ENCODE measurements at regions of chr1 and their contacts with region 1.

Region 1: DNA sequence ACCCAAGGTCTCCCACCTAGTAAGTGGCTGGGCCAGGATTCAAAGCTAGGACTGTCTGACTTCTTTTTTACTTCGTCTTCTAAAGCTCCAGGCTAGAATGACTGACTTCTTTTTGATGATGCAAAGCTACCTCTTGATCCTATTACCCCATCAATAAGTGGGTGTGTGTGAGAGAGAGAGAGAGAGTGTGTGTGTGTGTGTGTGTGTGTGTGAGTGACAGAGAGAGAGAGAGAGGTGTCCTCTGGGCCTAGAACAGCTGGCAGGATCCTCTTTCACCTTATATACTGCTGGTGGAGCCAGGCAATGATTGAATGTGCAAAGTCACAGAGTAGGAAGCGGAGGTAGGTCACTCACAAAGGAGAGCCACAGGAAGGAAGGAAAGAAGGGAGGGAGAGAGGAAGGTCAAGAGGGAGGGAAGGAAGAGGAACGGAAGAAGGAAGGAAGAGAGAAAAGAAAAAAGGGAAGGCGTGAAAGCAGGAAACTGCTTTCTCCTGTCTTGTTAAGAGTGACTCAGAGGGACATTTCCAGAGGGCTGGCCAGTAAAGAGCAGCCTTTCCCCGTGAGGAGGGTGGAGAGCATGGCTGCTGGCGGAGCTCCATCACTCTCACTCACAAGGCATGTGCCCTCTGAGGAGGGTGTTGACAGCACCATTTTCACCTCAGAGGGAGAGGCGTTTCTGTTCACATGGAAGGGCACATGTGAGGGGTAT is 68.9 kb downstream of the CDC7 start:
- DNase-seq: peak; percentile 95

Region 2: DNA sequence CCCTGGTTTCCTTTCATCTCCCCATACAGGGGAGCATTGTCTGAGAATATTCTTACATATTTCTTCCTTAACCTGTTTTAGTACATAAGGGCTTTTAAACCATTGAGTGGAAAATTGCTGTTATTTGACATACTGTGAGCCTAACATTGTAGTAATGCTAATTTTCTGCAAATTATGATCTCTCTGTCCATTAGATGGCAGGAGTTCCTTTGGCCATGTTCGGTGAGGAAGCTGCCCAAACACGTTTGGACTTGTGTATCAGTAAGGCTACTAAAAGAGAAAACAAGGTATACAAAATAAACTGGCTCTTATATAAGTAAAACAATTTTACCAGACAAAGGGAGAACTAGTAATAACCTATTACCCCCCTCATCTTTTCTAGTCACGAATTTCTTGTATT is 39.7 kb before region 1 on chr1:
- intact Hi-C with region 1: loop called in 1 of 2 experiments (anchors 2 kb)
- DNase-seq: no peak

Region 3: DNA sequence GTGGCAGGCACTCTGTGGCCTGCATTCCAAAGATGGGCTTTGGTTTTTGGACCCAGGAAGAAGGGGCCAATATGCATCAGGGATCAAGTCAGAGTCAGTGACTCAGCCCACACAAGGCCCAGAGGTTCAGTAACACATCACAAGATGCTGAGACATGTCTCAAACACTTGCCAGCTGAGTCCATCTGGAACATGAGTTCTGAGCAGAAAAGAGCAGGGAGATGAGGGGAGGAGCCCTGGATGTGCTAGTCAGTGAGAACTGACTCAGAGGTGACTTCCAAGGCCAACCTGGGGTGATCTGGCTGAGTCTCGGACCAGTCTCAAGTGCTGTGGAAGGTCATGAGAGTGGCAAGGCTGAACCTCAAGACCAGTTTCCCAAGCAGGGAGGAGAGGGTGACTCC is 81.2 kb after region 1 on chr1:
- intact Hi-C with region 1: no loop called
- DNase-seq: peak; percentile 89

Region 4: GRCh38 chr1:91732291-91733107 is 162.9 kb after region 1 on chr1:
- intact Hi-C with region 1: loop called in 1 of 2 experiments (anchors 10 kb)
- DNase-seq: no peak

Region 5: DNA sequence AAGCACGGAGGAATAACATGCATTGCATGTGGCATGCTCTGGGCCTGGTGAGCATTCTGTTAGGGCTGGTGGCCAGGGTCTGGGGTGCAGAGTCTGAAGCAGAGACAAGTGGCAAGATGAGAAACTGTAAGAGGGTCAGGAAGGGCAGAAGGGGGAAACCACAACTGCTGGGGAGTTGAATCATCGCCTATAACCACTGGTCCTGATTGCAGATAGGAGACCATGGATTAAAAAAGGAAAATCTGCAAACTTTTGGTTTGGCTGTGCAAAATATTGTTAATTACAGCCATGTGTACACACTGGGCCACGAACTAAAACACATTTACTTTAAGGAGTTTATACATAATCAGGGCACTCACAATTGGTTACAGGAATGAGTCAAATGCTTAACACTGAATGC is 239.8 kb after region 1 on chr1:
- intact Hi-C with region 1: no loop called
- DNase-seq: no peak

Measured in posterior vena cava (tissue), 2 donors.